ENCODE measurements at regions of chr13 and their contacts with region 1.

Region 1: DNA sequence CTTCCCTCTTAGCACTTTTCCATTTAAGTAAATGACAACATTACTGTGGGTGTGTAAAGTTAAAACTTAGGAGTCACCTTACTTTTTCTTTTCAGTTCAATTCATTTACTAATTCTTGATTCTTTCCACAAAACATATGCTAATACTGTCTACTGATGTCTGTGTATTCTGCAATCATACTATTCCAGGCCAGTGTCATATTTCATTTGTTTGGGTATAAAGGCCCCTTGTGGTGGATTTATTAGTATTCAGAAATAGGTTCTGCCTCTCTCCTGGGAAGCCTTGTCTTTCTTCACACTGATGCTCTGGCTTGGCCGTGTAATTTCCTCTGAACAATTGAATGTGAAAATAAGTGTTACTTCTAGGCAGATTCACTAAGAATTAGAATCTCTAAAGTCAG is 621.9 kb upstream of the SPRY2 start:
- DNase-seq: peak; percentile 32
- H3K4me3 ChIP-seq: no peak overlapping the region
- H3K27ac ChIP-seq: peak overlapping the region; percentile 70
- H3K4me1 ChIP-seq: peaks cover 15% of the 10 kb centered on the region
- H3K27me3 ChIP-seq: no peaks in the 10 kb centered on the region
- CTCF ChIP-seq: no peak
- POLR2A ChIP-seq: no peak

Region 2: GRCh38 chr13:79767126-79767525 is 1195.7 kb before region 1 on chr13:
- CTCF ChIA-PET with region 1: no interaction called
- POLR2A ChIA-PET with region 1: no interaction called
- dilution Hi-C with region 1: no loop called
- intact Hi-C with region 1: loop called (anchors 5 kb)
- DNase-seq: peak; percentile 73
- H3K4me3 ChIP-seq: no peak overlapping the region
- H3K27ac ChIP-seq: peak overlapping the region; percentile 76
- H3K4me1 ChIP-seq: peaks cover 14% of the 10 kb centered on the region
- H3K27me3 ChIP-seq: no peaks in the 10 kb centered on the region
- CTCF ChIP-seq: no peak
- POLR2A ChIP-seq: no peak

Region 3: GRCh38 chr13:80551650-80552497 is 411.0 kb before region 1 on chr13:
- CTCF ChIA-PET with region 1: interaction called, 3 read pairs
- POLR2A ChIA-PET with region 1: no interaction called
- dilution Hi-C with region 1: no loop called
- intact Hi-C with region 1: loop called (anchors 5 kb)
- DNase-seq: peak; percentile 88
- H3K4me3 ChIP-seq: no peak overlapping the region
- H3K27ac ChIP-seq: no peak overlapping the region
- H3K4me1 ChIP-seq: peaks cover 46% of the 10 kb centered on the region
- H3K27me3 ChIP-seq: no peaks in the 10 kb centered on the region
- CTCF ChIP-seq: no peak
- POLR2A ChIP-seq: no peak

Region 4: DNA sequence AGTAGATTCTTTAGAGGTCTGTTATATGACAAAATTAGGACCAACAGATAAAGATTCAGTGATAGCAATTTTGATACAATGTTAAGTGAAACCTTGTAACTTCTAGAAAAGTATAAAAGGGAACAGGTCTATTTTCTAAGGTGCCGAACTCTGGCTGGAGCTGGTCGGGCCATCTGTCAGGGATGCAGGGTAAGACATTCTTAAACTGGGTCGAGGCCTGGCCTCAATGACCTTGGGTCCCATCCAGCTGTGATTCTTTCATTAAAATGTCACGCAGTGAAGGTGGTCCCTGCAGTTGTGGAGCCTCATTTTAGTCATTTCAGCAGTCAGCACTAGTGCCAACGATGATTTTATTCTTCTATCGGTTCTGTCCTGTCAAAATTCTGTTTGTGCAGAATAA is 350.1 kb before region 1 on chr13:
- CTCF ChIA-PET with region 1: no interaction called
- POLR2A ChIA-PET with region 1: no interaction called
- dilution Hi-C with region 1: no loop called
- intact Hi-C with region 1: no loop called
- DNase-seq: no peak
- H3K4me3 ChIP-seq: no peak overlapping the region
- H3K27ac ChIP-seq: no peak overlapping the region
- H3K4me1 ChIP-seq: no peaks in the 10 kb centered on the region
- H3K27me3 ChIP-seq: no peaks in the 10 kb centered on the region
- CTCF ChIP-seq: no peak
- POLR2A ChIP-seq: no peak

Region 5: DNA sequence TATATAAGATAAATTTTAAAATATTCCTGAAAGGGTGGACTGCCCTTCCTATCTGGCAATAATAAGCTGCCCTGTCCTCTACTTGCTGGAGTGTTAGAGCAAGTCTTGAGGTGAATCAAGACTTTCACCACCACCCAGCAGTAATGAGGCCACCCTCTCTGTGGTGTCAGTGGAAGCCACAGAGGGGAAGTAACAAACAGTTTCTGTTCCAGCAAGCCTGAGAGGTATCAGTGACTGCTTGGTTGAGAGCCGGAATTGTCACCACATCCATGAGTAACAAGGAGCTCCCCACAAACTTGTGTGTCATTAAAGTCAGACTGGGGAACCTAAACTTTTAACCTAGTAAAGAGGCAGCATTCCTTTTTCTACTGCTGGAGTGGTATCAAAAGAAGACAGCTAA is 89.3 kb before region 1 on chr13:
- CTCF ChIA-PET with region 1: no interaction called
- POLR2A ChIA-PET with region 1: no interaction called
- dilution Hi-C with region 1: no loop called
- intact Hi-C with region 1: loop called (anchors 1 kb)
- DNase-seq: no peak
- H3K4me3 ChIP-seq: no peak overlapping the region
- H3K27ac ChIP-seq: no peak overlapping the region
- H3K4me1 ChIP-seq: peaks cover 9% of the 10 kb centered on the region
- H3K27me3 ChIP-seq: no peaks in the 10 kb centered on the region
- CTCF ChIP-seq: no peak
- POLR2A ChIP-seq: no peak

Region 6: GRCh38 chr13:80973721-80974120 is 10.9 kb after region 1 on chr13:
- CTCF ChIA-PET with region 1: interaction called, 29 read pairs
- POLR2A ChIA-PET with region 1: no interaction called
- dilution Hi-C with region 1: no loop called
- intact Hi-C with region 1: loop called (anchors 1 kb)
- DNase-seq: peak; percentile 58
- H3K4me3 ChIP-seq: no peak overlapping the region
- H3K27ac ChIP-seq: peak overlapping the region; percentile 65
- H3K4me1 ChIP-seq: peaks cover 12% of the 10 kb centered on the region
- H3K27me3 ChIP-seq: no peaks in the 10 kb centered on the region
- CTCF ChIP-seq: no peak
- POLR2A ChIP-seq: no peak

Measured in endothelial cell of umbilical vein (primary cell).